Caco-2 (cell line): ENCODE measurements at regions of chr12 and their contacts with region 1.

Region 1: GRCh38 chr12:69428351-69429065 is 41.7 kb upstream of the FRS2 start:
- DNase-seq: peak; percentile 38 to 51
- H3K4me3 ChIP-seq: no peak overlapping the region
- H3K4me3 Mint-ChIP-seq: peak overlapping the region; percentile 1
- H3K27ac Mint-ChIP-seq: peak overlapping the region; percentile 36
- H3K4me1 ChIP-seq: peaks cover 41% of the 10 kb centered on the region
- H3K4me1 Mint-ChIP-seq: peaks cover 31% of the 10 kb centered on the region
- H3K27me3 ChIP-seq: no peaks in the 10 kb centered on the region
- H3K27me3 Mint-ChIP-seq: no peaks in the 10 kb centered on the region
- CTCF ChIP-seq: no peak

Region 2: DNA sequence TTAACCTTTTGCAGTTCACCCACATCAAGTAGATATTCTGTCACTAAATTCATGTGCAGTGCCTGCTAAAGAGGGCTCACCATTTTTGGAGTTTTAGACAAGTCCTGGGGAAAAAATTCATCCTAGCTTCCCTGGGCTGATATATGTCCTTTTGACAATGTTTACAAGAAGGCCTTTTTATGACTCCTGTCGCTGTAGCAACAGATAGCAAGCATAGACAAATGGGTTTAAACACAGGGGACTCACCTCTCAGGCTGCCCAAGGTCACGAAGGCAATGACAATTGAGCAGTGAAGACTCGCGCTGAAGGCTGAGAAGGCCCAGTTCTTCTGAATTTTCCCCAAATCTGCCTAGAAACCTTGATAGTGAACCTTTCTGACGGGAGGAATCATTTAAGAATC is 344.8 kb before region 1 on chr12:
- CTCF ChIA-PET with region 1: no interaction called
- POLR2A ChIA-PET with region 1: no interaction called
- intact Hi-C with region 1: no loop called
- DNase-seq: peak in 1 of 2 experiments; percentile 35
- H3K4me3 ChIP-seq: no peak overlapping the region
- H3K4me3 Mint-ChIP-seq: no peak overlapping the region
- H3K27ac Mint-ChIP-seq: no peak overlapping the region
- H3K4me1 ChIP-seq: no peaks in the 10 kb centered on the region
- H3K4me1 Mint-ChIP-seq: peaks cover 7% of the 10 kb centered on the region
- H3K27me3 ChIP-seq: no peaks in the 10 kb centered on the region
- H3K27me3 Mint-ChIP-seq: no peaks in the 10 kb centered on the region
- CTCF ChIP-seq: no peak

Region 3: GRCh38 chr12:69447892-69448291 is 19.4 kb after region 1 on chr12:
- CTCF ChIA-PET with region 1: no interaction called
- POLR2A ChIA-PET with region 1: no interaction called
- intact Hi-C with region 1: no loop called
- DNase-seq: no peak
- H3K4me3 ChIP-seq: no peak overlapping the region
- H3K4me3 Mint-ChIP-seq: no peak overlapping the region
- H3K27ac Mint-ChIP-seq: no peak overlapping the region
- H3K4me1 ChIP-seq: peaks cover 12% of the 10 kb centered on the region
- H3K4me1 Mint-ChIP-seq: peaks cover 5% of the 10 kb centered on the region
- H3K27me3 ChIP-seq: no peaks in the 10 kb centered on the region
- H3K27me3 Mint-ChIP-seq: no peaks in the 10 kb centered on the region
- CTCF ChIP-seq: no peak

Region 4: GRCh38 chr12:69470189-69471075 is 41.9 kb after region 1 on chr12 and contains the start of gene FRS2:
- CTCF ChIA-PET with region 1: no interaction called
- POLR2A ChIA-PET with region 1: interaction called, 3 read pairs
- intact Hi-C with region 1: loop called (anchors 1 kb)
- DNase-seq: peak; percentile 95
- H3K4me3 ChIP-seq: peak within 1 kb of the TSS; percentile 59
- H3K4me3 Mint-ChIP-seq: peak within 1 kb of the TSS; percentile 86
- H3K27ac Mint-ChIP-seq: peak within 1 kb of the TSS; percentile 95
- H3K4me1 ChIP-seq: peaks cover 41% of the 10 kb centered on the region
- H3K4me1 Mint-ChIP-seq: peaks cover 67% of the 10 kb centered on the region
- H3K27me3 ChIP-seq: no peaks in the 10 kb centered on the region
- H3K27me3 Mint-ChIP-seq: no peaks in the 10 kb centered on the region
- CTCF ChIP-seq: peak; percentile 16 to 37
- total RNA-seq, gene FRS2: 82.3 and 86.5 TPM in 2 replicates